CD4-positive, alpha-beta T cell (primary cell): ENCODE measurements at regions of chr4 and their contacts with region 1.

Region 1: GRCh38 chr4:113901994-113902787 is 77.3 kb downstream of the ARSJ start:
- DNase-seq: peak; percentile 55 to 91 (median 65)
- ATAC-seq: peak; percentile 78
- H3K4me3 ChIP-seq: peak overlapping the region; percentile 19
- H3K4me3 Mint-ChIP-seq: peak overlapping the region; percentile 26
- H3K27ac ChIP-seq: peak overlapping the region; percentile 68 to 70
- H3K27ac Mint-ChIP-seq: peak overlapping the region; percentile 85
- H3K4me1 ChIP-seq: peaks cover 42% of the 10 kb centered on the region
- H3K4me1 Mint-ChIP-seq: peaks cover 83% of the 10 kb centered on the region
- H3K27me3 ChIP-seq: no peaks in the 10 kb centered on the region
- H3K27me3 Mint-ChIP-seq: no peaks in the 10 kb centered on the region
- CTCF ChIP-seq: peak; percentile 71

Region 2: GRCh38 chr4:113766882-113767281 is 135.3 kb before region 1 on chr4:
- CTCF ChIA-PET with region 1: no interaction called
- POLR2A ChIA-PET with region 1: interaction called, 4 read pairs
- intact Hi-C with region 1: loop called in 1 of 2 experiments (anchors 5 kb)
- DNase-seq: no peak
- ATAC-seq: no peak
- H3K4me3 ChIP-seq: no peak overlapping the region
- H3K4me3 Mint-ChIP-seq: no peak overlapping the region
- H3K27ac ChIP-seq: no peak overlapping the region
- H3K27ac Mint-ChIP-seq: no peak overlapping the region
- H3K4me1 ChIP-seq: peaks cover 4% of the 10 kb centered on the region
- H3K4me1 Mint-ChIP-seq: peaks cover 11% of the 10 kb centered on the region
- H3K27me3 ChIP-seq: no peaks in the 10 kb centered on the region
- H3K27me3 Mint-ChIP-seq: no peaks in the 10 kb centered on the region
- CTCF ChIP-seq: no peak

Region 3: DNA sequence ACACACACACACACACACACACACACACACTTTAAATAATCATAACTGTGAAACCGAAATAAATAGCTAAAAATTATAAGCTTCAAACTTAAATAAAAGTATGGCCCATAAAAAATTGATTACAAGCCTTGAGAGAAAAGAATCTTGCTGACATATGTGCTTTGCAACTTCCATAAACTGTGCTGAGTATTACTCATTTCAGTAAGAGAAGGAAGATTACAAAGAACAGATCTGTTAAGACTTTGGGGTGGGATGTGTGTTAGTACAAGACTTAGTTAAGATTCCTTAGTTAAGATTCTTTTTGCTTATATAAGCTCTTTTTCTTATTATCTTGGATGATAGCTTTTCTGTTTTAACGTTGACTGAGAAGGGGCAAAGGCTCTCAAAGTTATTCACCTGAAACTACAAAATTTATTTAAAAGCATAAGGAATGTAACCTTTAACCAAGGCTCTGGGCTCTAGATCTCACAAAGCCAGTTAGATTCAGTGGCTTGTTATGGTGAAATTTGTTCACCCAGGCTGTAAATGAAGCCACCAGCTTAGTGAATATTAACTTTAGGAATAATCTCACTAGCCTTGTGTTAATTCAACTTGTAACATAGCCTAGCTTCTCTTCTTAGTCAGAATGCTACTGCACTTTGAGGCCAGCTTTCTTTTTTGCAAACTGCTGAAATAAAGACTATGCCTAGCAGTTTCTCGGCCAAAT is 19.1 kb after region 1 on chr4:
- CTCF ChIA-PET with region 1: no interaction called
- POLR2A ChIA-PET with region 1: no interaction called
- intact Hi-C with region 1: no loop called
- DNase-seq: no peak
- ATAC-seq: no peak
- H3K4me3 ChIP-seq: no peak overlapping the region
- H3K4me3 Mint-ChIP-seq: no peak overlapping the region
- H3K27ac ChIP-seq: no peak overlapping the region
- H3K27ac Mint-ChIP-seq: no peak overlapping the region
- H3K4me1 ChIP-seq: no peaks in the 10 kb centered on the region
- H3K4me1 Mint-ChIP-seq: no peaks in the 10 kb centered on the region
- H3K27me3 ChIP-seq: no peaks in the 10 kb centered on the region
- H3K27me3 Mint-ChIP-seq: no peaks in the 10 kb centered on the region
- CTCF ChIP-seq: no peak